ENCODE measurements at regions of chr19 and their contacts with region 1.

Region 1: GRCh38 chr19:40090241-40091204 is at the start of gene ZNF780A:
- DNase-seq: peak; percentile 75
- H3K4me3 Mint-ChIP-seq: peak within 1 kb of the TSS; percentile 99
- H3K27ac Mint-ChIP-seq: peak within 1 kb of the TSS; percentile 98
- H3K4me1 Mint-ChIP-seq: peaks cover 25% of the 10 kb centered on the region
- H3K27me3 Mint-ChIP-seq: peaks cover 9% of the 10 kb centered on the region
- total RNA-seq, gene ZNF780A: 19.9 and 21.3 TPM in 2 replicates

Region 2: GRCh38 chr19:39996811-39997594 is 93.5 kb before region 1 on chr19 and contains the start of gene ZNF546:
- intact Hi-C with region 1: loop called (anchors 1 kb)
- DNase-seq: peak; percentile 89
- H3K4me3 Mint-ChIP-seq: peak within 1 kb of the TSS; percentile 98
- H3K27ac Mint-ChIP-seq: peak within 1 kb of the TSS; percentile 96
- H3K4me1 Mint-ChIP-seq: peaks cover 28% of the 10 kb centered on the region
- H3K27me3 Mint-ChIP-seq: no peaks in the 10 kb centered on the region
- total RNA-seq, gene ZNF546: 4.6 and 5.2 TPM in 2 replicates

Region 3: GRCh38 chr19:40055832-40056504 is 34.6 kb before region 1 on chr19 and contains the start of gene ZNF780B:
- intact Hi-C with region 1: loop called (anchors 1 kb)
- DNase-seq: peak; percentile 67
- H3K4me3 Mint-ChIP-seq: peak within 1 kb of the TSS; percentile 99
- H3K27ac Mint-ChIP-seq: peak within 1 kb of the TSS; percentile 95
- H3K4me1 Mint-ChIP-seq: peaks cover 28% of the 10 kb centered on the region
- H3K27me3 Mint-ChIP-seq: peaks cover 5% of the 10 kb centered on the region
- total RNA-seq, gene ZNF780B: 19.5 and 20.5 TPM in 2 replicates

Region 4: GRCh38 chr19:40165362-40165937 is 74.9 kb after region 1 on chr19:
- intact Hi-C with region 1: no loop called
- DNase-seq: peak; percentile 34
- H3K4me3 Mint-ChIP-seq: no peak overlapping the region
- H3K27ac Mint-ChIP-seq: no peak overlapping the region
- H3K4me1 Mint-ChIP-seq: no peaks in the 10 kb centered on the region
- H3K27me3 Mint-ChIP-seq: no peaks in the 10 kb centered on the region

Measured in activated T-helper 2 cell treated with anti-CD3 and anti-CD28 coated beads, Interferon-gamma antibody, Interleukin-2, Interleukin-4, amounts not matched to agents 10 μg/mL and 5 μg/mL and 100 μg/mL, durations not matched to agents 14 hours and 24 hours and 36 hours (primary cell).